GM10248 (cell line): ENCODE measurements at regions of chr1 and their contacts with region 1.

Region 1: DNA sequence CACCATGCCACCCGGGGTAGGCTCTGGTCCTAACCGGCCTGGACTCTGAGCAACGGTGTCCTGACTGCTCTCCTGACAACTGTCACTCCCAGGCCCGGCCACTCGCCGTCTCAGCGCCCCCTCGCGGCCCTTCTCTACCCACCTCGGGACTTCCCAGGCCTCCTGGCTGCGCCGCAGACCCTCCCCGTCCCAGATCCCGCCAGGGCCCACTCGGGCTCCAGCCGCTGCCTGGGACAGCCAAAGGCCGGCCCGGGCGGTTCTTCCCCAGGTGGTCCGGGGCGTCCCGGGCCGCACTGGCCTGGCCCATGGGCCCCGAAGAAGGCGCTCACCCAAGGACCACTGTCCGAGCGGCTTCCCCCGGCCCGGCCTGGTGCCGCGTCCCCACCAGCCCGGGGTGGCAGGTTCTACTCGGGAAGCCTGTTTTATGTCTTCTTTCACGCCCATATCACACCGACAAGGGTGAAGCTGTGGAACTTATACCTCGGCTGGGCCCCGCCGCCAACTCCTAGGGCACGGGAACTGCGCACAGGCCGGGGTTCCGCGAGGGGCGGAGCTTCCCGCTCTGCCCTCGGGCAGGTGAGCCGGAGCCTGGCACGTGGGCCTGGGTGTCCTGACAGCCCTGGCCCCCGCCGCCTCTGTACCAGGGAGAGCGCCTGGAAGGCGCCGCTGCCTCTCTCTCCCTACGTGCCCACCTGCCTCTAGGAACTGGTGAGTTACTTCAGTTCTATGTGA is 138.3 kb downstream of the TTLL7 start:
- DNase-seq: peak; percentile 77
- CTCF ChIP-seq: peak; percentile 81

Region 2: GRCh38 chr1:83827741-83828522 is 32.7 kb before region 1 on chr1:
- CTCF ChIA-PET with region 1: no interaction called
- POLR2A ChIA-PET with region 1: no interaction called
- DNase-seq: no peak
- CTCF ChIP-seq: no peak

Region 3: DNA sequence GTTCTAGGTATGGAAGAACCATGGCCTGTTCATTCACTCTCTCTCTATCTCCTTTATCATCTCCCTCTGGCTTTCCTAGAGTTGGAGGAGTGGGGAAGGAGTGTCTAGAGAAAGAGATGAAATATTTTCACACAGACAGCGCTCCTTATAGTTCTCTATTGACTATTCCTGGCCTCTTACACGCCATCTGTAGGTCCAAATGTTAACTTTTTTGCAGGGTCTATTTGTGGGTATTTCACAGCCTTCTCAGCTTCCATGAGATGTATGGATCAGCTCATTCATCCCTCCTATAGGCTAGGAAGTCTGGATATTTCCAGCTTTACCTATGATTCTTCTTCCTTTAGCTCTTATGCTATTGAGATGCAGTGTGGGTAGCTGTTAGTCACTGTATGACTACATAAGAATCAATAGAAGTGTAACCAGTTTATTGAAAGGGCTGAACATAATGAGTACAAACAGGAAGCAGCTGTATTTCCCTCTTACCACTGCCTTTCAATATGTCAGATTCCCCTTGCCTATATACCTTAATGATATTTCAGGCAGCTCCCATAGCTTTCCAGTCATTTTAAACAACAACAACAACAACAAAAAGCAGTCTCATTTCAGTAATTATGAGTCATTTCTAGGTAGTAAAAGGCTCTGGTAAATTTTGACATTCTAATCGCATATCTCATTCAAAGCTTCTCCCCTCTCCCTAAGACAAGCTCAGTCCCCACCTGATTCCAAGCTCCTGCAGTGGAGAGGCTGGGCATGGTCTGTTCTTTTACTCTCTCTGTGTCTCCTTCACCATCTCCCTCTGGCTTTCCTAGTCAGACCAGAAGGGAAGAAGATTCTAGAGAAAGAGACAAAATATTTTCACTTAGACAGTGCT is 11.2 kb before region 1 on chr1:
- CTCF ChIA-PET with region 1: interaction called, 21 read pairs
- POLR2A ChIA-PET with region 1: no interaction called
- DNase-seq: peak; percentile 13
- CTCF ChIP-seq: no peak